Activated B cell treated with CpG ODN at 0.5 μM for 24 hours (primary cell): ENCODE measurements at regions of chr12 and their contacts with region 1.

Region 1: GRCh38 chr12:124466216-124467128 is 100.9 kb downstream of the NCOR2 start:
- DNase-seq: peak; percentile 79
- ATAC-seq: peak; percentile 97
- H3K4me3 Mint-ChIP-seq: peak overlapping the region; percentile 71
- H3K27ac Mint-ChIP-seq: peak overlapping the region; percentile 77
- H3K4me1 Mint-ChIP-seq: peaks cover 55% of the 10 kb centered on the region
- H3K27me3 Mint-ChIP-seq: no peaks in the 10 kb centered on the region
- CTCF ChIP-seq: no peak

Region 2: DNA sequence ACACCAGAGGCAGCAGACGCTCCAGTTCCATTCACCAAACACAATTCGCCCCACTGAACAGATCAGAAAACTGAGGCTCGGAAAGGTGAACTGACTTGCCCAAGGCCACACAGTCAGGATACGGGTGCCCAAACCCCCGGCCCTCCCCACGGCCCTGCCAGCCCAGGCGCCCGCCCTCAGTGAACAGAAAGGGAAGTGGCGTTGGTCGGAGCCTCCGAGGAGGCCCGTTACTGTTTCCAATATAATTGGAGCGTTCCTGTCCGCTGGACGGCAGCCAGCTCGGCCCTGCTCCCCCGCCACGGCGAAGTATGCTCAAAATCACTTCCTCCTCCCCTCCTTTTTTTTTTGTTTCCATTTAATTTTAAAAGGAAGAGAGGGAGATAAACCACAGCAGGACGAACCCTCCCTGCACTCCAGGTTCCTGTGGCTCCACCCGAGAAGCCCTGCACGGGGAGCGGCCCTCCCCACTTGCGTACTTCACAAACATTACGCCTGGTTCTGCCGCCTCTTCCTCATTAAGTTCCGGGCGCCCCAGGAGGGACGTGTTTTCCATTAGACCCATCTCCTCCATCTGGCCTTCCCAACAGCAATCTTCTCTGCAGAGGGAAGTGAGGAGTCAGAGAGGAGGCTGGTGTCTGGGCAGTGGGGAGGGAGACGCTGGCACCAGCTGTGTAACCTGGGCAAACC is 39.8 kb after region 1 on chr12:
- CTCF ChIA-PET with region 1: no interaction called
- POLR2A ChIA-PET with region 1: no interaction called
- intact Hi-C with region 1: loop called (anchors 5 kb)
- DNase-seq: no peak
- ATAC-seq: peak; percentile 43
- H3K4me3 Mint-ChIP-seq: peak overlapping the region; percentile 8
- H3K27ac Mint-ChIP-seq: no peak overlapping the region
- H3K4me1 Mint-ChIP-seq: peaks cover 55% of the 10 kb centered on the region
- H3K27me3 Mint-ChIP-seq: no peaks in the 10 kb centered on the region
- CTCF ChIP-seq: no peak